ENCODE measurements at regions of chr18 and their contacts with region 1.

Region 1: DNA sequence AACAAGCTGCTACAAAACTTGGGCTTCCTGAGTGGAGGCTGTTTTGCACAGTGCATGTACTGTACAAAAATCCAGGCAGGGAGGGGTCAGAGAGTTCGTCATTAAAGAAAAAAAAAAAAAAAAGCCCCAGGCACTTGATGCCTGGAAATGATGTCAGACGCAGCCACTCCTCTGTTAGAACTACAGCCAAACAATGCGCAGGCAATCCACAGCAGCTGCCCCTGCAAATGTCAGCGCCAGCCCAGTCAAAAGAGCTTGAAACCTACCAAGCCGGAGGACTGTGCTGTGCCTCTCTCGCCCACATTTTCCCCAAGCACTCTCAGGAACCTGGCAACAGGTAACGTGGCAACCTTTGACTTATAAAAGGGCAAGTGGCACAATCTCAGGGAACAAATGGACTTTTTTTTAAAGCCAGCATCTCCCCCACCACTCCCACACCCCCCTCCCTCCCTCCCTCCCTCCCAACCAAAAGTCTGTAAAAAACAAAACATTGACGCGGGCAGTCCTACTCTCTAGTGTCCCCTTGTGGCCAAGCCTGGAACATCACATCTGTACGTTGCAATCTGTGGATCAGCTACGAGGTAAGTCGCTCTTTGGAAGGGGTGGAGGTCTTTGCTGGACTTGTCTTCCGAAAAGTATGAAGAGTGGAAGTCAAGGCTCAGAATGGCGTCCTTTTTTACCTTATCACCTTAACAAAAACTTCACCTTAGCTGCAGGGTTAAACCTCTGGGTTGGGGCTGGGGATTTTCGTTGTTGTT is 144.1 kb downstream of the TGIF1 start:
- DNase-seq: peak; percentile 74
- H3K4me3 ChIP-seq: peak overlapping the region; percentile 53 to 67
- H3K27ac ChIP-seq: peak overlapping the region; percentile 100
- H3K4me1 ChIP-seq: peaks cover 36 to 56% of the 10 kb centered on the region in 2 experiments
- H3K27me3 ChIP-seq: no peaks in the 10 kb centered on the region
- CTCF ChIP-seq: peak; percentile 73
- EP300 ChIP-seq: peak in 1 of 2 experiments; percentile 26; a peak in 3 of 4 replicates
- RAD21 ChIP-seq: peak; percentile 70

Region 2: DNA sequence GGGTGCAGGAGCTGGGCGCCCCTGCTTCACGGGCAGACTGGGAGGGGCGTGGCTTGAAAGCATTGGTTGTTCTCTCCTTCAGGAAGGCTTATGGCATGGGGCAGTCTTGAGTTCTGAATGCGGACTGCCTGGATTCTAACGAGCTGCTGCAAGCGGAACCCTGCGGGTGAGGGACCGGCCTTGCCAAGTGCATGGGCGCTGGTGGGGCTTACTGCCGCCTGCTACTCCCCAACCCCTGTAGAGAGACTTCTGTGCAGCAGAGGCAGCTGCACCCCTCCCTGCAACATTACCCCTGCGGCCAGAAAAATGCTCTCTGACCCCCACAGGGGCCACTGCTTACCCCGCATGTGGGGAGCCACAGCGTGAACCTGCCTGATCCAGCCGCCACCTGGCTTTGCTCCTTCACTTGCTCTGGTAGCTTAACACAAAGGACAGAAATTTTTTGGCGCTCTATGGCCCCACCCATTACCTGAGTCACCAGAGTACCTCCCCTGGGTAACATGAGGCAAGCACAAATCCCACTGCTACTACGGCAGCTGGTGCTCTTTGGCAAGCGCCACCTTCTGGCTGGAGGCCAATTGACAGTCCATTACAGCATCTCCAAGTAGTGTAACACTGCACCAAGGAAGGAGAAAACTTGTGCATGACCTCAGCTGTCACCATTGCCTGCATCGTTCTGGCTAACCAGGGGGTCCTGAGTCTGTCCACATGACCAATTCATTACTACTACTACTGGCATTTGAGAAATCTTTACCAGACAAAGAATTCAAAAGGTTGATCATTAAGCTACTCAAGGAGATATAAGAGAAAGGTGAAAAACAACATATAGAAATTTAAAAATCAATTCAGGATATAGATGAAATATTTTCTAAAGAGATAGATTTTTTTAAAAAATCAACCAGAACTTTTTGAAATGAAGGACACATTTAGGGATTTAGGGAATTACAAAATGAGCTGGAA is 296.8 kb before region 1 on chr18:
- CTCF ChIA-PET with region 1: interaction called, 11 read pairs
- POLR2A ChIA-PET with region 1: interaction called, 10 read pairs
- DNase-seq: peak; percentile 75
- H3K4me3 ChIP-seq: peak overlapping the region; percentile 79 to 88
- H3K27ac ChIP-seq: peak overlapping the region; percentile 65 to 81
- H3K4me1 ChIP-seq: peaks cover 0 to 4% of the 10 kb centered on the region in 2 experiments; a peak in 1 of 4 replicates
- H3K27me3 ChIP-seq: no peaks in the 10 kb centered on the region
- CTCF ChIP-seq: peak; percentile 84
- EP300 ChIP-seq: no peak; a peak in 1 of 4 replicates
- RAD21 ChIP-seq: peak; percentile 47

Region 3: DNA sequence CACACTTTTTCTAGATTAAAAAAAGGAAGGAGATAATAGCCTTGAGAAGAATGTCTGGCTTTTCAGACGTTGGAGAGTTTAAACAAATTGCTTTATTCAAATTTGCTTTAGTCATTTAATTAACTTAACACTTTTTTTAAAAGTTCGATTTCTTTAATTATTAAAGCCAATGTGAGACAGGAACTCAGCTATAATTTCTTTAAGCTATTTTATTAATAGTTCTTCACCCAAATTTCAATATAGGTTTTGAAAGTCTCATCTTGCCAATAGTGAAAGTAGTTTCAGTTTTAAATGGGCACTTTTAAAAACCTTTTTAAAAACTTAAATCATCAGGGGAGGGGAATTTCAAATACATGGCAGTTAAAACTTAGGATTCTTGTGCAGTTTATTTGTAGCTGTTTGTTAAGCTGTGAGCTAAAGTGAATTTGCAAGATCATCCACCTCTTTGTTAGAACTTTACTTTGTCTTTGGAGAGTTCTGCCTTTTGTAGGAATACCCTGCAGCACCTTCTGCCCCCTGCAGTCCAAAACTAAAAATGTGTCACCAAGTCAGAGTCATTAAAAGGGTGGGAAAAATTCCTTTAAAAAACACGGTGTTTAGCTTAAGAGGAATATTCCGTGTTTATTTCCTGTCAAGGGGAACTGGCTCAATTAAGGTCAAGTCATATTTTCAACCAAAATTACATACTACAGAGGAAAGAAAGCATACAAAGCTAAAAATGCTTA is 139.6 kb before region 1 on chr18:
- CTCF ChIA-PET with region 1: interaction called, 66 read pairs
- POLR2A ChIA-PET with region 1: interaction called, 4 read pairs
- DNase-seq: peak; percentile 51
- H3K4me3 ChIP-seq: peak overlapping the region; percentile 74 to 93
- H3K27ac ChIP-seq: peak overlapping the region; percentile 76 to 99
- H3K4me1 ChIP-seq: peaks cover 27 to 38% of the 10 kb centered on the region in 2 experiments; a peak in 3 of 4 replicates
- H3K27me3 ChIP-seq: no peaks in the 10 kb centered on the region
- CTCF ChIP-seq: peak; percentile 83
- EP300 ChIP-seq: no peak
- RAD21 ChIP-seq: peak; percentile 61

Region 4: DNA sequence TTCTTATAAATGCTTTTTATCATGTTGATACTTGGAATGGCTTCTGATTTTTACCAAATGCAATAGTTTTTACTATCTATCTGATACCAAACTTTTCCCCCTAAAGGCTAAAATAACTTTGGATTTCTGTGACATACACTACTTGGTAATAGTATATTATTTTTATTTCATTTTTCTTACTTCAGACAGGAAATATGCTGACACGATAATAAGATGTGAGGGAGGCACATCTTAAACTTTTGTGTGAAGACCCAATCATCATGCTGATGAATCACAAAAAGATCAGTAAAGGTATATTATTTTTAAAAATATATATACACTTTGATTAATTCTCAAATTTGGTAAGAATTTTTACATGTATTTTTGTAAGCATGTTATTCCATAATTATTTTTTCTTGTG is 21.3 kb before region 1 on chr18:
- CTCF ChIA-PET with region 1: interaction called, 23 read pairs
- POLR2A ChIA-PET with region 1: no interaction called
- DNase-seq: no peak
- H3K4me3 ChIP-seq: no peak overlapping the region
- H3K27ac ChIP-seq: no peak overlapping the region
- H3K4me1 ChIP-seq: peaks cover 0 to 2% of the 10 kb centered on the region in 2 experiments; a peak in 2 of 4 replicates
- H3K27me3 ChIP-seq: no peaks in the 10 kb centered on the region
- CTCF ChIP-seq: no peak
- EP300 ChIP-seq: no peak
- RAD21 ChIP-seq: no peak

Measured in SK-N-SH (cell line).